ENCODE measurements at regions of chr2 and their contacts with region 1.

Region 1: GRCh38 chr2:63588385-63589147 is at the starts of genes MDH1 and WDPCP:
- DNase-seq: peak; percentile 93 to 96
- ATAC-seq: peak; percentile 88 to 95
- H3K4me3 ChIP-seq: peak within 1 kb of the TSS; percentile 63 to 93 (median 76)
- H3K27ac ChIP-seq: peak within 1 kb of the TSS; percentile 86 to 92 (median 90)
- H3K4me1 ChIP-seq: peaks cover 54% of the 10 kb centered on the region in 2 donors
- H3K27me3 ChIP-seq: no peaks in the 10 kb centered on the region
- CTCF ChIP-seq: no peak
- POLR2A ChIP-seq: peak; percentile 76 to 87
- total RNA-seq, gene MDH1: 133 to 241 (median 194) TPM
- total RNA-seq, gene WDPCP: 7.2 to 47.3 (median 13.0) TPM

Region 2: DNA sequence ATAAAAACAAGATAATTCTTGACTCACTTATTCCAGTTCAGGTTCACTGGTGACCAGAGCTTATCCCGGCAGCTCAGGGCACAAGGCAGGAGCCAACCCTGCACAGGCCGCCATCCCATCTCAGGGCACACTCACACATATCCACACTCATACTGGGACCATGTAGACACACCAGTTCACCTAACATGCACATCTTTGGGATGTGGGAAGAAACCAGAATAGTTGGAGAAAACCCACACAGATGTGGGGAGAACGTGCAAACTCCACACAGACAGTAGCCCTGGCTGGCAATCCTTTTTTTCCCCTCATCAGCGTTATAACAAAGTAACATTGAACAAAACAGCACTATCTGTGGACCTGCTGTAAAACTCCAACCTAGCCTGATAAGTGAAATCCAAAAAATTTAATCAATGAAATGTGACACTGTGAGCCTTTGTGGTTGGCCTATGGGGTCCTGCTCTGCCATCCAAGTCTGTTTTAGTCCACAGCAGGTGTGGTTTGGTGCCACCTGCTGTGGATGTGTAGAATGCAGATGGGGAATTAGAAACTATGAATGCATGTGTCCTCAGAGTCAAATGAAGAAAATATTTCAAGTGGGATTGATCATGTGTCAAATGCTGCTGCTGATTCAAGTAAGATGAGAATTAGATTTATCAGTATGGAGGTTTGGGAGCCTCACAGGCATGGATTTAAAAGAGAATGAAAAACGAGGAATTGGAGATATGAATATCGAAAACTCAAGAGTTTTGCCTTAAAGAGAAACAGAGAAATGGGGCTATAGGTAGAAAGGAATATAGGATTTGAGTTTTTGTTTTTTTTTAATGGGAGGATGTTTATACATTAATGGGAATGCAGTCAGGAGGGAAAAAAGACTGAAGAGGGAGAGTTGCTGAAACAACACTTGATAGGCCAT is 300.2 kb after region 1 on chr2:
- in situ Hi-C with region 1: loop called in 1 of 4 experiments (anchors 25 kb)
- intact Hi-C with region 1: loop called (anchors 2 kb)
- DNase-seq: peak; percentile 40 to 48
- ATAC-seq: peak; percentile 72 to 84
- H3K4me3 ChIP-seq: no peak overlapping the region
- H3K27ac ChIP-seq: peak overlapping the region; percentile 78 to 90 (median 83)
- H3K4me1 ChIP-seq: peaks cover 32 to 44% of the 10 kb centered on the region in 2 donors
- H3K27me3 ChIP-seq: no peaks in the 10 kb centered on the region
- CTCF ChIP-seq: peak; percentile 73 to 85 (median 78)
- POLR2A ChIP-seq: no peak

Region 3: GRCh38 chr2:64018923-64019718 is 430.6 kb after region 1 on chr2 and contains the start of gene VPS54:
- in situ Hi-C with region 1: no loop called
- intact Hi-C with region 1: loop called (anchors 10 kb)
- DNase-seq: peak; percentile 17 to 64
- ATAC-seq: peak; percentile 84 to 89
- H3K4me3 ChIP-seq: peak within 1 kb of the TSS; percentile 65 to 85 (median 80)
- H3K27ac ChIP-seq: peak within 1 kb of the TSS; percentile 88 to 96 (median 92)
- H3K4me1 ChIP-seq: peaks cover 34 to 39% of the 10 kb centered on the region in 2 donors
- H3K27me3 ChIP-seq: no peaks in the 10 kb centered on the region
- CTCF ChIP-seq: peak; percentile 15 to 34 (median 25)
- POLR2A ChIP-seq: peak; percentile 66
- total RNA-seq, gene VPS54: 7.9 to 12.4 (median 9.8) TPM